Transverse colon (tissue), 4 donors: ENCODE measurements at regions of chr17 and their contacts with region 1.

Region 1: DNA sequence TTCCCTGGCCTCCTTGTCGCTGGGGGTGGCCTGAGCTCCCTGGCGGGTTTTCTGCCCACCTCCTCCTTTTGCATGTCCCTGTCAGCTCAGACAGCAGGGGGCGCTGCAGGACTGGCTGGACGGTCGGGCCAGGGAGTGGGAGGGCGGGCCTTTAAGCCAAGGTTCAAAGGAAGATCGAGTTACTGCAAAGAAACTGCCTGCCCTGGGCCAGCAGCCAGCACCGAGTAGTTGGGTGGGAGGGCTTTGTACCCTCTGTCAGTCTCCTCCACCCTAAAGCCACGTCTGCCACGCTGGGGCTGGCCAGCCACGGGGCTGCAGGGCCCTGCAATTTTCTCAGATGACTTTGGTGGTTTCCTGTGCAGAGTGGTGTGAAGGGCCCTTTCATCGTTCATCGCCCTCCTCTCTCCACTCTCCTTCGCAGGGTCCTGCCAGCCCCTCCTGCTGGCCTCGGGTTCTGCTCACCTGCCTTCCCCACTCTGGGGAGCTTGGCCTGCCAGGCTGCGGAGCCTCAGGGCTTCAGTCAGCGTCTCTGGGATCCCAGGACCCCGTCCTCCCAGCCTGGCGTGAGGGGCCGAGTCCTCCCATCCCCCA is 12.3 kb downstream of the GPR142 start:
- DNase-seq: peak; percentile 95
- H3K4me3 ChIP-seq: peak overlapping the region in 1 of 4 donors; percentile 6
- H3K27ac ChIP-seq: peak overlapping the region; percentile 70 to 83 (median 82)
- H3K4me1 ChIP-seq: peaks cover 13 to 25% (median 19%) of the 10 kb centered on the region in 4 donors
- H3K27me3 ChIP-seq: no peaks in the 10 kb centered on the region
- CTCF ChIP-seq: peak; percentile 95 to 98 (median 97)
- EP300 ChIP-seq: no peak
- POLR2A ChIP-seq: no peak

Region 2: GRCh38 chr17:74442670-74443515 is 63.3 kb after region 1 on chr17:
- in situ Hi-C with region 1: no loop called
- intact Hi-C with region 1: no loop called
- DNase-seq: peak; percentile 91
- H3K4me3 ChIP-seq: peak overlapping the region in 2 of 4 donors; percentile 8 to 31
- H3K27ac ChIP-seq: peak overlapping the region; percentile 87 to 91 (median 90)
- H3K4me1 ChIP-seq: peaks cover 28 to 36% (median 32%) of the 10 kb centered on the region in 4 donors
- H3K27me3 ChIP-seq: no peaks in the 10 kb centered on the region
- CTCF ChIP-seq: peak in 1 of 5 experiments; percentile 14
- EP300 ChIP-seq: no peak
- POLR2A ChIP-seq: peak; percentile 89

Region 3: GRCh38 chr17:74457146-74457819 is 77.7 kb after region 1 on chr17:
- in situ Hi-C with region 1: loop called in 1 of 4 experiments (anchors 5 kb)
- intact Hi-C with region 1: loop called (anchors 1 kb)
- DNase-seq: peak; percentile 80
- H3K4me3 ChIP-seq: no peak overlapping the region
- H3K27ac ChIP-seq: no peak overlapping the region
- H3K4me1 ChIP-seq: peaks cover 15 to 35% (median 29%) of the 10 kb centered on the region in 4 donors
- H3K27me3 ChIP-seq: no peaks in the 10 kb centered on the region
- CTCF ChIP-seq: peak; percentile 95 to 99 (median 98)
- EP300 ChIP-seq: no peak
- POLR2A ChIP-seq: no peak

Region 4: GRCh38 chr17:74497471-74497870 is 117.9 kb after region 1 on chr17:
- in situ Hi-C with region 1: loop called in 1 of 4 experiments (anchors 5 kb)
- intact Hi-C with region 1: no loop called
- DNase-seq: no peak
- H3K4me3 ChIP-seq: no peak overlapping the region
- H3K27ac ChIP-seq: no peak overlapping the region
- H3K4me1 ChIP-seq: peaks cover 0 to 4% (median 0%) of the 10 kb centered on the region in 4 donors
- H3K27me3 ChIP-seq: no peaks in the 10 kb centered on the region
- CTCF ChIP-seq: no peak
- EP300 ChIP-seq: no peak
- POLR2A ChIP-seq: no peak

Region 5: DNA sequence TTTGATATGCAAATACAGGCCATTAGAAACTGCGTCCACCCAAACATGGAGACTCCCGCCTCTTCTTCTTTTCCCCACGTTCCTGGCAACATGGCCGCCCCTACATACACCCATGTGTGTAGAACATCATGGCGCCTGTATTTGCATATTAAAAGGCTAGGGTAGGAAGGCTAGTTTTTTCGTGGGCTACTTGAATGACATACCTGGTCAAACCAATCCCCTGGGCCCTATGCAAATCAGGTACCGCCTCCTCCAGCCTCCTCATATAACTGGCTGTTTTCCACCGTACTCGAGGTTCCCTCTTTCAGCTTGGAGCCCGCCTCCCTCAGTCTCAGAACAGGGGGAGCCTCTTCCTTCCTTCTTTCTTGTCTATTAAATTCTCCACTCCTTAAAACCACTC is 152.5 kb after region 1 on chr17:
- in situ Hi-C with region 1: no loop called
- intact Hi-C with region 1: no loop called
- DNase-seq: peak; percentile 43
- H3K4me3 ChIP-seq: no peak overlapping the region
- H3K27ac ChIP-seq: no peak overlapping the region
- H3K4me1 ChIP-seq: no peaks in the 10 kb centered on the region
- H3K27me3 ChIP-seq: peaks cover 10% of the 10 kb centered on the region
- CTCF ChIP-seq: no peak
- EP300 ChIP-seq: no peak
- POLR2A ChIP-seq: peak; percentile 39